ENCODE measurements at regions of chr7 and their contacts with region 1.

Region 1: DNA sequence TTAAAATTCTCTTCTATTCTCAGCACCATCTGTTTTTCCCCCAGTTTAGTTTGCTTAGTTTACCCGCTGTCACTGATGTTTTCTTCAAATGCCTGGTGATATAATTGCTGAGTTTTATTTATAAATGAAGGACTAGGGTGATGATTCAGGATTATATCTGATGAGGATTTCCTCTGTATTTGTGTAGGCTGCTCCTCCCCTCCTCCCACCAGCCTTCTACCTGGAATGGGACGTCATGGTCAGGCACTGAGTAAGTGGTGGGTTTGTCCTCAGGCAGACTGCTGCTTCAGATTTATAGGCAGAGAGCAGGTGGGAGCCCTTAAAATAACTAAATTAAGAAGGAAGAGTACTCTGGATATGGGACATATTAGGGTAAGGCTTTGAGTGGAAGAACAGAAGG is 35.8 kb downstream of the PALS2 start:
- DNase-seq: no peak
- H3K4me3 Mint-ChIP-seq: no peak overlapping the region
- H3K27ac Mint-ChIP-seq: no peak overlapping the region
- H3K4me1 Mint-ChIP-seq: peaks cover 21% of the 10 kb centered on the region
- H3K27me3 Mint-ChIP-seq: no peaks in the 10 kb centered on the region

Region 2: DNA sequence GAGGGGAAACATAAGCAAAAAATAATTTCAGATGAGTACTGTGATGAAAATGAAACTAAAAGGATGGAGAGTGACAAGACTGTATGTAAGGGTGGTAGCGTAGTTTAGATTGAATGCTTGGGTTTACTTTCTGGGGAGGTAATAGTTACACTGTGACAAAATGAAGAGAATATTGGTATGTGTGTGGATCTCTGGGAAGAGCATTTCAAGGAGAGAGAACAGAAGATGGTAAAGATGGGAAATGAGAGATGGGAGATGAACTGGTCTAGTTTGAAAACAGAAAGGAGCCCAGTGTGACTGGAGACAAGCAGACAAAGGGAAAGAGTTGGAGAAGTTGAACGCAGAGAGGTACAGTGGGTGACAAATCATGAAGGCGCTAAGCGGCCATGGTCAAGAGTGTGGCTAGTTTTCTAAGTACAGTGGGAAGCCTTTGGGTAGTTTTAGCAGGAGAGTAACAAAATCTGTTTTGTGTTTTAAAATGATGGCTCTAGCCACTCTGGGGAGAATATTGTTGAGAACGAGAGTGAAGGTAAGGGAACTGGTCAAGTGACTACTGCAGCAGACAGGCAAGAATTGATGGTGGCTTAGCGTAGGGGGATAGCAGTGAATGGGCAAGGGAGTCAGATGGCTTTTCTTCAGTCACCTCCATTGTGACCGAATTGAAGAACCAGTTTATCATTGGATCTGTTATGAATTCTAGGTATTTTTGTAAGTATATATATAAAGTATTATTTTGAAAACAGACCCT is 13.2 kb before region 1 on chr7:
- intact Hi-C with region 1: loop called (anchors 1 kb)
- DNase-seq: no peak
- H3K4me3 Mint-ChIP-seq: no peak overlapping the region
- H3K27ac Mint-ChIP-seq: no peak overlapping the region
- H3K4me1 Mint-ChIP-seq: peaks cover 8% of the 10 kb centered on the region
- H3K27me3 Mint-ChIP-seq: no peaks in the 10 kb centered on the region

Region 3: DNA sequence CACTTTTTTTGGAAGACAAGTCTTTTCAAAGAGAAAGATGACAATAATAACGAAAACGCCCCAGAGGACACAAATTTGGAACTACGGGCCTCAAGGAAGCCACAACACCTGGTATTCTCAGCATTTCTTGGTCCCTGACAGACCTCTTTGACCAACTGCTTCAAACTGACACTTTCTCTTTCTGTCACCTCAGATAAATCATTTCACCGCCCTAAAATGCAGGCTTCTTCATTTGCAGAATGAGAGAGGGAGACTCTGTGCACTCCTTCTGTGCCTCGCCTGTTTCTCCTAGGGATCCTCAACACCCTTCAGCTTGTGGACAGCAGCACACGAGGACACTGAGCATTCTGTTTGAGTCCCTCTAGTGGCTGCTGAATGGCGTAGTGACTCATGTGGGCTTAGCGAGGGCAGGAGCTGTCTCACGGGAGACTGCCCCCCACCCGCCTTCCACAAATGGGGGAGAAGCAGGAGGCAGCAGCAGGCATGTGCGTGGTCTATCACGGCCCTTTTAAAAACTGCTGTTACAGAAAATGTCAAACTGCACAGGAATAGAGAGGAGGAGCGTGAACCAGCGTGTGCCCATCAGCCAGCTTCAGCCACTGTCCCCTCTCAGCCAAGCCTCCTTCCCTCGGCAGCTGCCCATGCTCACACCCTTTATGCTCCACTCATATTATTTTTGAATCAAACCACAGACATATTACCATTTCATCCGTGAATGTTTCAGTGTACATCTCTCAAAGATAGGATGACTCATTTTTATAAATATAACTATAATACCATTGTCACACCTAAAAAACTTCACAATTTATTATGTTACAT is 106.8 kb after region 1 on chr7:
- intact Hi-C with region 1: no loop called
- DNase-seq: no peak
- H3K4me3 Mint-ChIP-seq: no peak overlapping the region
- H3K27ac Mint-ChIP-seq: no peak overlapping the region
- H3K4me1 Mint-ChIP-seq: peaks cover 20% of the 10 kb centered on the region
- H3K27me3 Mint-ChIP-seq: no peaks in the 10 kb centered on the region

Region 4: DNA sequence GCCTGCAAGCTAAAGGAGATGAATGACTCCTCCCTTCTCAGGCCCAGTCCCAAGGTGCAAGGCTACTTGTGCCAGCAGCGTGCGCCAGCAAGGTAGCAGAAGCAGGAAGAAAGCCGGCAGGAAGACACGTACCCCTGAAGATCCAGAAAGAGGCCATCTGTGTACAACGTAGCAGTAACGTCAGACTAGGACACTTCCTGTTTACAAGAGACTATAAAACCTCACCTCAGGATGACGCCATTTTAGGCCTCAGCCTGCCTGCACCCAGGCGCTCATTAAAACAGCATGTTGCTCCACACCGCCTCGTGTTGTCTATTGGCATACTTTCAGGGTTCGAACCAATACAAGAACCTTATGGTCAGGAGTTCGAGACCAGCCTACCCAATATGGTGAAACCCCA is 1641.2 kb after region 1 on chr7:
- intact Hi-C with region 1: no loop called
- DNase-seq: no peak
- H3K4me3 Mint-ChIP-seq: no peak overlapping the region
- H3K27ac Mint-ChIP-seq: no peak overlapping the region
- H3K4me1 Mint-ChIP-seq: no peaks in the 10 kb centered on the region
- H3K27me3 Mint-ChIP-seq: peaks cover 3% of the 10 kb centered on the region

Measured in activated T-helper 2 cell treated with anti-CD3 and anti-CD28 coated beads, Interferon-gamma antibody, Interleukin-2, Interleukin-4, amounts not matched to agents 10 μg/mL and 5 μg/mL and 100 μg/mL, durations not matched to agents 14 hours and 24 hours and 36 hours (primary cell).